ENCODE measurements at regions of chr18 and their contacts with region 1.

Region 1: GRCh38 chr18:23088310-23088870 is 46.9 kb upstream of the CABLES1 start:
- DNase-seq: no peak
- H3K4me3 Mint-ChIP-seq: no peak overlapping the region
- H3K27ac Mint-ChIP-seq: no peak overlapping the region
- H3K4me1 Mint-ChIP-seq: peaks cover 14% of the 10 kb centered on the region
- H3K27me3 Mint-ChIP-seq: peaks cover 4% of the 10 kb centered on the region

Region 2: DNA sequence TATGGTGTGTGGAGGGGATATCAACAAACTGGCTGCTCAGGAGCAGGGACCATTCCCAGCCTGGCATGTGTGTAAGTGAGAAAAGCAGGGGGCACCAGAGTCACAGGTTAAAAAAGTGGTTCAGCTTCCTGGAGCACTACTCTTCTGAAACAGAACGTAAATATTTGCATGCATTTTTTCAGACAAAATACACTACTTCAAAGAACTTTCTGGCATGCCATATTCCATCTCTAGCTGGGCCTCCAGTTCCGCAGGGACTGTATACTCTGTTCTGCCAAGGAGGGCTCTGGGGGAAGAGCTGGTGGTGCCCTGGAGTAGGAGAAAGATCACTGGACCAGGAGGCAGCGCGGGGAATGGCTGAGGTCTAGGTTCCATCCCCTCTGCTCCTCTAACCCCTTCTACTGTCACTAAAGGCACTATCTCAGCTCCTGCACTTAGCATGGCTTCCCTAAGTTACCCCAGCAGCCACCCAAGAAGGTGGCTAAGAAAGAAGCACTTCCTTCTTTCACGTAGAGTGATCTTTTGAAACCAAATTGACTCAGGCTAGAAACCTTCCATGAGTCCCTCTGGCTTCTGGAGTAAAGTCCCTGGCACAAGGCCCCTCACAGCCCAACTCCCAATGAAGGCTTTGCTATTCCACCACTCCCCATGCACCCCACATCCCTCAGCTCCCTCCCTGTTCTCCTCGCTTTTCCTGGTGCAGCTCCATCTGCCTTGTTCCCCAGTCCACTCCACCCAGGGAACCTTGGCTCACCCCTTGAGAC is 10.7 kb before region 1 on chr18:
- CTCF ChIA-PET with region 1: interaction called, 14 read pairs
- POLR2A ChIA-PET with region 1: no interaction called
- DNase-seq: peak; percentile 12
- H3K4me3 Mint-ChIP-seq: no peak overlapping the region
- H3K27ac Mint-ChIP-seq: peak overlapping the region; percentile 54
- H3K4me1 Mint-ChIP-seq: peaks cover 39% of the 10 kb centered on the region
- H3K27me3 Mint-ChIP-seq: no peaks in the 10 kb centered on the region

Measured in activated CD4-positive, alpha-beta T cell treated with anti-CD3 and anti-CD28 coated beads, Interleukin-2, amount 10 ng/mL, durations not matched to agents 7 days and 5 days (primary cell).